CD14-positive monocyte (primary cell): ENCODE measurements at regions of chr6 and their contacts with region 1.

Region 1: GRCh38 chr6:33771146-33772081 is 17.5 kb downstream of the LEMD2 start:
- DNase-seq: peak; percentile 29 to 55 (median 50)
- H3K4me3 ChIP-seq: no peak overlapping the region
- H3K4me3 Mint-ChIP-seq: no peak overlapping the region
- H3K27ac ChIP-seq: no peak overlapping the region
- H3K27ac Mint-ChIP-seq: peak overlapping the region in 3 of 7 donors; percentile 1 to 32 (median 19)
- H3K4me1 ChIP-seq: peaks cover 0 to 4% of the 10 kb centered on the region in 2 donors
- H3K4me1 Mint-ChIP-seq: peaks cover 9% of the 10 kb centered on the region
- H3K27me3 ChIP-seq: peaks cover 0 to 15% of the 10 kb centered on the region in 2 donors
- H3K27me3 Mint-ChIP-seq: peaks cover 3 to 21% (median 12%) of the 10 kb centered on the region in 3 donors
- CTCF ChIP-seq: peak; percentile 92

Region 2: DNA sequence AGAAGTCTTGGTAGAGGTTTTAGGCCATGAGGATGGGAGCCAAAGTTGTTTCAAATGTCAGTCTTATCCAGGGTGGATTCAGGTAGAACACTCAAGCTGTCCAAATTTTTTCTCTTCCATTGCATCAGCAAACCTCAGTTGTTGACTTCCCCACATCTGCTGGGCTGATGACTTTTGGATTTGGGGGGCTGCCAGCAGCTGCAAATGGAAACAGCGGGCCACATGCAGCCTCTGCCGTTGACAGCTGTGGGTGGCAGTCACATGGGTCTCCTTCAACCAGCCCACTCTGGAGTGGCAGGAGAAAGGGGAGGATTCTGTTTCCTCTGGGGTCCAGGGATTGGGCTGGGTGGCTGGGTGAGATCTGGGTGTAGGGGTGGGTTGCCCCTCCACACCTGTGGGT is 38.2 kb after region 1 on chr6:
- intact Hi-C with region 1: no loop called
- DNase-seq: no peak
- H3K4me3 ChIP-seq: no peak overlapping the region
- H3K4me3 Mint-ChIP-seq: peak overlapping the region in 1 of 2 donors; percentile 7
- H3K27ac ChIP-seq: no peak overlapping the region
- H3K27ac Mint-ChIP-seq: peak overlapping the region in 1 of 7 donors; percentile 46
- H3K4me1 ChIP-seq: peaks cover 0 to 4% of the 10 kb centered on the region in 2 donors
- H3K4me1 Mint-ChIP-seq: peaks cover 8% of the 10 kb centered on the region
- H3K27me3 ChIP-seq: peaks cover 6 to 35% of the 10 kb centered on the region in 2 donors
- H3K27me3 Mint-ChIP-seq: peaks cover 23 to 63% (median 35%) of the 10 kb centered on the region in 3 donors
- CTCF ChIP-seq: no peak

Region 3: DNA sequence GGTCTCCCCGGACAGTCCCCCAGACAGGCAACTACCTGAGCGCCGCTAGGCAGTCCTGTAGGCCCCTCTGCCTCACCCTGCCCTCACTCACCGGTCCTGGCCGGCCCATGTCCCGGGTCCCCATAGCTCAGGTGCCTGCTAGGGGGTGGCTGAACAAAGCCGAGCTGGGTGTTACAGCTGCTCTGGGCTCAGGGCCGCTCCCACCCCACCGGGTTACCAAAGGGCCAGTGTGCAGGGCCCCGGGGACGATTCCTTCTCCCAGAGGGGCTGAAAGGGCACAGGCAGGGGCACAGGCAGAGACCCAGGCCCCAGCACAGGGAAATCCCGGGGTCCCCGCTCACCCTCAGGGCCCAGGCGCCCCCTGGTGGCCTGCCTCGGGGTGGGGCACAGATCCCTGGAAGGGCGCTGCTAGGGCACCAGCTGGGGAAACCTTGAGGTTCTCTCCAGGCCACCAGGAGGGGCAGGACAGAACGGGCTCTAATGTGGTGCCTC is 256.1 kb after region 1 on chr6:
- intact Hi-C with region 1: loop called (anchors 2 to 5 kb)
- DNase-seq: peak in 1 of 3 donors; percentile 23
- H3K4me3 ChIP-seq: no peak overlapping the region
- H3K4me3 Mint-ChIP-seq: no peak overlapping the region
- H3K27ac ChIP-seq: no peak overlapping the region
- H3K27ac Mint-ChIP-seq: no peak overlapping the region
- H3K4me1 ChIP-seq: no peaks in the 10 kb centered on the region
- H3K4me1 Mint-ChIP-seq: no peaks in the 10 kb centered on the region
- H3K27me3 ChIP-seq: no peaks in the 10 kb centered on the region
- H3K27me3 Mint-ChIP-seq: peaks cover 0 to 6% (median 2%) of the 10 kb centered on the region in 3 donors
- CTCF ChIP-seq: peak; percentile 79

Region 4: DNA sequence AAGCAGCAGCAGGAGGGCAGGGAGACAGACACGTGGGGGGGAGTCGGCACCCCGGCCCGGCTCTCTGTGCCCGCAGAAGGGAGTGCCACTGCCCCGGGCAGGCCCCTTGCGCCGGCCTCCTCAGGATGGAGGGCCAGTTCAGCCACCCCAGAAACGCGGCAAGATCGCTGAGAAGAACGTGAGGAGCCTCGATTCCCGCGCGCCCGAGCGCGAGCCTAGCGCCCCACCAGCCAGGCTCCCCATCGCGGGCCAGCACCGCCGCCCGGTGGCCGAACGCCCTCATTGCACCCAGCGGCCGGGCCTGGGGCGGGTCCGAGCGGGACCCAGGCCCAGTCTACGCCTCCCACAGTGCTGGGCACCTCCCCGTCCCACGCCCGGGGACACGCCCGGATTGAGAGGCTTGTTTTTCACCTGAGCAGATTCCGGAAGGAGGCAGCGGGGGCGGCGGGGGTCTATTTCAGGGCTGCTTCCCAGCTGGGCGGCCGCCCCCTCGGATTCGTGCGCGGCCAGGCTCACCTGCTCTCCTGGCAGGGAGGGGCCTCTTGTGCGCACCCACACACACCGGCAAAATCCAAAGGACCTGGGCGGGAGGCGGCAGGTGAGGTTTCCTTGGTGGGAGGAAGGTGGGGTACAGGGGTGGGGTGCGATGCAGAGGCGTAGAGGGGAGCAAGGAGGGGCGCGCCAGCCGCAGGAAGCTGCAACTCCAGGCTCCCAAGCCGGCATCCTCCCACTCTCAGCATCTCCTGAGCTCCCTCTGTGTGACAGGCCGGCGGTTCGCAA is 383.4 kb after region 1 on chr6:
- intact Hi-C with region 1: loop called in 1 of 2 experiments (anchors 10 kb)
- DNase-seq: peak in 2 of 3 donors; percentile 9 to 18
- H3K4me3 ChIP-seq: peak overlapping the region in 1 of 3 experiments; percentile 40
- H3K4me3 Mint-ChIP-seq: peak overlapping the region in 1 of 2 donors; percentile 77
- H3K27ac ChIP-seq: no peak overlapping the region
- H3K27ac Mint-ChIP-seq: no peak overlapping the region
- H3K4me1 ChIP-seq: peaks cover 0 to 9% of the 10 kb centered on the region in 2 donors
- H3K4me1 Mint-ChIP-seq: peaks cover 4% of the 10 kb centered on the region
- H3K27me3 ChIP-seq: peaks cover 4 to 64% of the 10 kb centered on the region in 2 donors
- H3K27me3 Mint-ChIP-seq: peaks cover 42 to 80% (median 63%) of the 10 kb centered on the region in 3 donors
- CTCF ChIP-seq: peak; percentile 94

Region 5: GRCh38 chr6:34852406-34853085 is 1081.1 kb after region 1 on chr6:
- intact Hi-C with region 1: no loop called
- DNase-seq: no peak
- H3K4me3 ChIP-seq: no peak overlapping the region
- H3K4me3 Mint-ChIP-seq: no peak overlapping the region
- H3K27ac ChIP-seq: no peak overlapping the region
- H3K27ac Mint-ChIP-seq: peak overlapping the region in 1 of 7 donors; percentile 46
- H3K4me1 ChIP-seq: no peaks in the 10 kb centered on the region
- H3K4me1 Mint-ChIP-seq: peaks cover 4% of the 10 kb centered on the region
- H3K27me3 ChIP-seq: no peaks in the 10 kb centered on the region
- H3K27me3 Mint-ChIP-seq: no peaks in the 10 kb centered on the region
- CTCF ChIP-seq: no peak